Heart left ventricle (tissue), 16 donors: ENCODE measurements at regions of chr5 and their contacts with region 1.

Region 1: GRCh38 chr5:60586307-60586901 is 113.6 kb downstream of the DEPDC1B start:
- DNase-seq: no peak
- ATAC-seq: no peak
- H3K4me3 ChIP-seq: no peak overlapping the region
- H3K27ac ChIP-seq: no peak overlapping the region
- H3K4me1 ChIP-seq: no peaks in the 10 kb centered on the region
- H3K27me3 ChIP-seq: no peaks in the 10 kb centered on the region
- CTCF ChIP-seq: peak; percentile 26 to 62 (median 46)
- POLR2A ChIP-seq: no peak

Region 2: DNA sequence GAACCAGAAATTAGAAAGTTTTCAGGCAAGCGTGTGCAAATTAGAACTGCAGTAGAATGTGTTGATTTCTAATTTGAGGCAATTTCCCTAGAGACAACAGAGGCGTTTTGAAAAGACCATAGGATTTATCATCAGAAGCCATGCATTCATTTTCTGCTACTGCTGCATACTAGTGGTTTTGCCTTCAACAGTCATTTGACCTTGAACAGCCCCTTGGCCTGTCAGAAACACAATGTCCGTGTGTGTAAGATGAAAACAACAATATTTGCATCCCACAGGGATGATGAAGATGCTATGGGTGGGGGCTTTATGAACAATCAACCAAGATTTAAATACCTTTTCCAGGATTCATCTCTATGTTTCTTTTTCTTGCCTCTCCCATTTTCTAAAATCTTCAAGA is 766.6 kb before region 1 on chr5:
- intact Hi-C with region 1: loop called in 2 of 10 experiments (anchors 5 to 10 kb)
- DNase-seq: no peak
- ATAC-seq: no peak
- H3K4me3 ChIP-seq: no peak overlapping the region
- H3K27ac ChIP-seq: no peak overlapping the region
- H3K4me1 ChIP-seq: no peaks in the 10 kb centered on the region
- H3K27me3 ChIP-seq: no peaks in the 10 kb centered on the region
- CTCF ChIP-seq: no peak
- POLR2A ChIP-seq: no peak

Region 3: DNA sequence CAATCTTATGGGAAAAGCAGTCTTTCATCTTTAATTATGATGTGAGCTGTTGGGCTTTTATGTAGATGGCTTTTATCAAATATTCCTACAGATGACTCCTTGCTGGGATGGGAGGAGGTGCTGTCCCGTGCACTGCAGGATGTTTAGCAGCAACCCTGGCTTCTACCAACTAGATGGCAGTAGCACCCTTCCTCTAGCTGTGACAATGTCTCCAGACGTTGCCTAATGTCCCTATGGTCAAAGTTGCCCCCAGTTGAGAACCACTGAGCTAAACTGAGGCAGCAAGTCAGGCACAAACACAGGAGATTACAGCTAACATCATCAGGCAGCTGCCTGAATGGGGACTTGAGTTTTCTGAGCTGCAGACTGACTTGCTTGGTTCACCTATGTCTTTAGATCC is 291.0 kb before region 1 on chr5:
- intact Hi-C with region 1: loop called in 9 of 10 experiments (anchors 2 to 10 kb)
- DNase-seq: peak in 1 of 5 donors; percentile 8
- ATAC-seq: no peak
- H3K4me3 ChIP-seq: no peak overlapping the region
- H3K27ac ChIP-seq: no peak overlapping the region
- H3K4me1 ChIP-seq: no peaks in the 10 kb centered on the region
- H3K27me3 ChIP-seq: no peaks in the 10 kb centered on the region
- CTCF ChIP-seq: peak in 11 of 12 donors; percentile 16 to 54 (median 34)
- POLR2A ChIP-seq: no peak

Region 4: DNA sequence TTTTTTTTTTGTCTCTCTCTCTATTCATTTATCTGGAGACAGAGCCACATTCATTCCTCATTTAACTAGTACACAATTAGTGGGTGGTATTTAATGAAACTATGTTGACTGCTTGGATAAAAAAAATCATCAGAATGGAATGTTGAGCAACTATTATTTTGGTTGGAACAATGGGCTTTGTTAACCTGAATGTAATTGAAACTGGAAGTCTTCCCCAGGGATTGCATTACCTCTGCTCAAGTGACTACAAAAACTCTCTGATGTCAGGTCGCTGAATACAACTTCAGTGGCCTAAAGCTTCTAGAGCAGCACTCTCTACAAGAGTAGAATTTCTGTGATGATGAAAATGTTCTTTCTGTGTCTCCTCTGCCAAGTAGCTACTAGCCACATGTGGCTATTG is 182.2 kb before region 1 on chr5:
- intact Hi-C with region 1: loop called in 1 of 10 experiments (anchors 10 kb)
- DNase-seq: no peak
- ATAC-seq: peak in 2 of 4 donors; percentile 24 to 42
- H3K4me3 ChIP-seq: no peak overlapping the region
- H3K27ac ChIP-seq: peak overlapping the region in 3 of 12 donors; percentile 26 to 33 (median 26)
- H3K4me1 ChIP-seq: no peaks in the 10 kb centered on the region
- H3K27me3 ChIP-seq: no peaks in the 10 kb centered on the region
- CTCF ChIP-seq: no peak
- POLR2A ChIP-seq: no peak